ENCODE measurements at regions of chr4 and their contacts with region 1.

Region 1: DNA sequence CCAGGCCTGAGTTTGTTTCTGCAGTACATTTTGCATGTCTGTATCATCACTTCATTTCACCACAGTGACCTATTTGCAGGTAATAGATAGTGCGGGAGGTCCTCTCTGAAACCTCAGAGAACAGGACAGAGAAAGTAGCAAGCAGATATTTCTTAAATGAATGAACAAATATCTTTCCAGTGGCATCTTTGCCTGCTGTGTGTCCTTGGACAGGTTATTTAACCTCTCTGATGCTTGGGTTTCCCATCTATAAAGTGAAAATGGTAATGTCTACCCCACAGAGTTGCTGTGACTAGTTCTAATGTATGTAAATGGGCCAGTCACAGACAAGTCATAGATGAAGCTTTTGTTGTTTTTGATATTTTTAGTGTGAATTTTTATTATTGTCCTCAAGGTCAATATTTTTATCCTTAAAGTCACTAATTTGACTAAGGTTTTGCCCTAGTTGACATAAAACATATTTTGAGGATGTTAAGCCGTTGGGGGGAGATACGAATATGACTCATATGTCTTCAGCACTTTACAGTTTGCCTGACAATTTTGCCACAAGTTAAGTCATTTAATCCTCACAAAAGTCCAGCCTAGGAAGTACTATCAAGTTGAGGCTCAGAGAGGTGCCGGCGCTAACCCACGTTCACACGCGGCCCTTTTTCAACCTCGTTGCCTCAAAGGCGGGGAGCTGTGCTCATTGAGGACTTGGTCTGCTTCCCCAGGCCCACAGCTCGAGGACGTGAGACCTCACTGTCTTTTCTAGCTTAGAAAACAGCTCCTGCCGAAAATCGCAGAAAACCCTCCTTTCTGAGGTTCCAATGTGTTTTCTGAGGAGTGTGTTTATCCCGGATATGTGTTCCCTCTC is 126.7 kb upstream of the STX18 start:
- DNase-seq: no peak
- H3K4me3 Mint-ChIP-seq: no peak overlapping the region
- H3K27ac Mint-ChIP-seq: no peak overlapping the region
- H3K4me1 Mint-ChIP-seq: no peaks in the 10 kb centered on the region
- H3K27me3 Mint-ChIP-seq: no peaks in the 10 kb centered on the region

Region 2: GRCh38 chr4:4496592-4497372 is 171.8 kb before region 1 on chr4:
- CTCF ChIA-PET with region 1: no interaction called
- DNase-seq: no peak
- H3K4me3 Mint-ChIP-seq: no peak overlapping the region
- H3K27ac Mint-ChIP-seq: no peak overlapping the region
- H3K4me1 Mint-ChIP-seq: peaks cover 6% of the 10 kb centered on the region
- H3K27me3 Mint-ChIP-seq: no peaks in the 10 kb centered on the region

Region 3: GRCh38 chr4:4680758-4681157 is 12.2 kb after region 1 on chr4:
- CTCF ChIA-PET with region 1: interaction called, 11 read pairs
- DNase-seq: no peak
- H3K4me3 Mint-ChIP-seq: no peak overlapping the region
- H3K27ac Mint-ChIP-seq: no peak overlapping the region
- H3K4me1 Mint-ChIP-seq: no peaks in the 10 kb centered on the region
- H3K27me3 Mint-ChIP-seq: no peaks in the 10 kb centered on the region